ENCODE measurements at regions of chr10 and their contacts with region 1.

Region 1: GRCh38 chr10:82914655-82915136 is 1039.7 kb downstream of the NRG3 start:
- DNase-seq: no peak
- ATAC-seq: no peak
- H3K4me3 ChIP-seq: no peak overlapping the region
- H3K27ac ChIP-seq: no peak overlapping the region
- H3K4me1 ChIP-seq: peaks cover 3 to 4% of the 10 kb centered on the region in 2 donors
- H3K27me3 ChIP-seq: no peaks in the 10 kb centered on the region

Region 2: GRCh38 chr10:82934429-82934828 is 19.7 kb after region 1 on chr10:
- intact Hi-C with region 1: loop called in 1 of 2 experiments (anchors 1 kb)
- DNase-seq: no peak
- ATAC-seq: no peak
- H3K4me3 ChIP-seq: no peak overlapping the region
- H3K27ac ChIP-seq: no peak overlapping the region
- H3K4me1 ChIP-seq: no peaks in the 10 kb centered on the region
- H3K27me3 ChIP-seq: no peaks in the 10 kb centered on the region

Measured in aorta (tissue), 5 donors.